OCI-LY7 (cell line): ENCODE measurements at regions of chr7 and their contacts with region 1.

Region 1: GRCh38 chr7:94395141-94396036 is 694 bp downstream of the COL1A2 start:
- DNase-seq: peak; percentile 64
- H3K4me3 ChIP-seq: no peak overlapping the region
- H3K27ac ChIP-seq: no peak overlapping the region
- H3K4me1 ChIP-seq: no peaks in the 10 kb centered on the region
- CTCF ChIP-seq: peak; percentile 89

Region 2: DNA sequence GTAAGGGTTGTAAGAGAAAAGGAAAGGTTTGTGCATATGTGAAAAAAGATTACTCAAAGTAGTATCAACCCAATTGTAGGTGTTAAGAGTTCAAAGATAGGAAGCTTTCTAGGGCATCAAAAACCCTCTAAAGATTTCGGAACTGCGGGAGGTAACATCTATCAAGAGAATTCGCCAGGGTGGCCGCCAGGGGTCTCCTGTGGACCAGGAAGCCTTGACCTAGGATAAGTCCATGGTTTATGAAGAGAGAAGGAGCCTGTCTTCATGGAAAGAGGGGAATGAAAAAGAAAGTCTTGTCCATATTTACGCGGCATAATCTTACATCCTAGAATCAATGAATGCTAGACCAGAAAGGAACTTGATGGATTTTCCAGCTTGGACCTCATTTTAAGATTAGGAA is 680.2 kb before region 1 on chr7:
- CTCF ChIA-PET with region 1: no interaction called
- POLR2A ChIA-PET with region 1: no interaction called
- intact Hi-C with region 1: loop called (anchors 5 kb)
- DNase-seq: peak; percentile 30
- H3K4me3 ChIP-seq: no peak overlapping the region
- H3K27ac ChIP-seq: no peak overlapping the region
- H3K4me1 ChIP-seq: no peaks in the 10 kb centered on the region
- CTCF ChIP-seq: peak; percentile 75

Region 3: GRCh38 chr7:93799750-93800357 is 595.5 kb before region 1 on chr7:
- CTCF ChIA-PET with region 1: no interaction called
- POLR2A ChIA-PET with region 1: no interaction called
- intact Hi-C with region 1: loop called (anchors 2 kb)
- DNase-seq: peak; percentile 29
- H3K4me3 ChIP-seq: no peak overlapping the region
- H3K27ac ChIP-seq: no peak overlapping the region
- H3K4me1 ChIP-seq: no peaks in the 10 kb centered on the region
- CTCF ChIP-seq: peak; percentile 83

Region 4: DNA sequence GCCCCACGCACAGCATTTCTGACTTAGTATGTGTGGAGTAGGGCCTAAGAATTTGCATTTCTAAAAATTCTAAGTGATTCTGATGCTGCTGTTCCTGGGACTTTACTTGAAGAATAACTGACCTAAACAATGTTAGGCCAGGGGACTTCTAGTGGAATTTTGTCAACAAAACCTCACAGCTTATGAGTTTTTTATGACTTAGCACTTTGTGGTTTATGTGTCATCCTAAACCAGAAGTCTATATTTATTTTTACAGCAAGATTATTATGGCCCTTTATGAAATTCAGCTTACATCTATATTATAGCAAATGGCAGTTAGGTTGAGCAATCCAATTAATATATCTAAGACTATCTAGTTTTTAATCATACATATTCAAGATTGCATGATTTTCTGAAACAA is 366.6 kb before region 1 on chr7:
- CTCF ChIA-PET with region 1: no interaction called
- POLR2A ChIA-PET with region 1: no interaction called
- intact Hi-C with region 1: no loop called
- DNase-seq: no peak
- H3K4me3 ChIP-seq: no peak overlapping the region
- H3K27ac ChIP-seq: no peak overlapping the region
- H3K4me1 ChIP-seq: peaks cover 15% of the 10 kb centered on the region
- CTCF ChIP-seq: no peak

Region 5: DNA sequence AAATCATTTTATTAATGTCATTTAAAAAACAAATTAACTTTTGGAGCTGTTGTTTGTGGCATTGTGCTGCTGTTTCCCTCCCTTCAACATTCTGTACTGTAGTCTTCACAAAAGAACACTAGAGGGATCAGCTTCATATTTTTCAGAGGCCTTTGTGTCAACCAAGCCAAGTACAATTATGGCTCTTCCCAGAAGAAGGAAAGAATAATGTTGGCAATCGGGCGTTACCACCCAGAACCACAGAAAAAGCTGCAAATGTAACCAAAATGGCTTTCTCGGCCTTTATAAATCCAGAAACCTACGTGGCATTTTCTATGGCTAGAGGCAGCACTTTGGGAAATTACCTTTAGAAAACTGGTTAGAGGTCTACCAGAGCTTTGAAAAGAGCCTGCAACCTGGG is 99.5 kb before region 1 on chr7:
- CTCF ChIA-PET with region 1: no interaction called
- POLR2A ChIA-PET with region 1: no interaction called
- intact Hi-C with region 1: no loop called
- DNase-seq: no peak
- H3K4me3 ChIP-seq: no peak overlapping the region
- H3K27ac ChIP-seq: no peak overlapping the region
- H3K4me1 ChIP-seq: no peaks in the 10 kb centered on the region
- CTCF ChIP-seq: no peak

Region 6: GRCh38 chr7:94405506-94405905 is 10.1 kb after region 1 on chr7:
- CTCF ChIA-PET with region 1: no interaction called
- POLR2A ChIA-PET with region 1: no interaction called
- intact Hi-C with region 1: no loop called
- DNase-seq: no peak
- H3K4me3 ChIP-seq: no peak overlapping the region
- H3K27ac ChIP-seq: no peak overlapping the region
- H3K4me1 ChIP-seq: no peaks in the 10 kb centered on the region
- CTCF ChIP-seq: no peak